Activated CD4-positive, alpha-beta T cell treated with anti-CD3 and anti-CD28 coated beads for 36 hours (primary cell): ENCODE measurements at regions of chr1 and their contacts with region 1.

Region 1: GRCh38 chr1:16387201-16388196 is 20.5 kb downstream of the SZRD1 start:
- DNase-seq: no peak
- ATAC-seq: peak; percentile 40
- H3K4me3 Mint-ChIP-seq: peak overlapping the region; percentile 61
- H3K27ac Mint-ChIP-seq: peak overlapping the region; percentile 56
- H3K4me1 Mint-ChIP-seq: peaks cover 77% of the 10 kb centered on the region
- H3K27me3 Mint-ChIP-seq: no peaks in the 10 kb centered on the region

Region 2: GRCh38 chr1:15741183-15741850 is 646.2 kb before region 1 on chr1:
- CTCF ChIA-PET with region 1: no interaction called
- POLR2A ChIA-PET with region 1: no interaction called
- intact Hi-C with region 1: no loop called
- DNase-seq: peak; percentile 88
- ATAC-seq: peak; percentile 96
- H3K4me3 Mint-ChIP-seq: no peak overlapping the region
- H3K27ac Mint-ChIP-seq: no peak overlapping the region
- H3K4me1 Mint-ChIP-seq: peaks cover 5% of the 10 kb centered on the region
- H3K27me3 Mint-ChIP-seq: no peaks in the 10 kb centered on the region

Region 3: GRCh38 chr1:16374266-16374665 is 13.2 kb before region 1 on chr1:
- CTCF ChIA-PET with region 1: interaction called, 6 read pairs
- POLR2A ChIA-PET with region 1: interaction called, 7 read pairs
- intact Hi-C with region 1: loop called (anchors 1 to 2 kb)
- DNase-seq: no peak
- ATAC-seq: no peak
- H3K4me3 Mint-ChIP-seq: no peak overlapping the region
- H3K27ac Mint-ChIP-seq: peak overlapping the region; percentile 48
- H3K4me1 Mint-ChIP-seq: peaks cover 76% of the 10 kb centered on the region
- H3K27me3 Mint-ChIP-seq: no peaks in the 10 kb centered on the region